ENCODE measurements at regions of chr1 and their contacts with region 1.

Region 1: DNA sequence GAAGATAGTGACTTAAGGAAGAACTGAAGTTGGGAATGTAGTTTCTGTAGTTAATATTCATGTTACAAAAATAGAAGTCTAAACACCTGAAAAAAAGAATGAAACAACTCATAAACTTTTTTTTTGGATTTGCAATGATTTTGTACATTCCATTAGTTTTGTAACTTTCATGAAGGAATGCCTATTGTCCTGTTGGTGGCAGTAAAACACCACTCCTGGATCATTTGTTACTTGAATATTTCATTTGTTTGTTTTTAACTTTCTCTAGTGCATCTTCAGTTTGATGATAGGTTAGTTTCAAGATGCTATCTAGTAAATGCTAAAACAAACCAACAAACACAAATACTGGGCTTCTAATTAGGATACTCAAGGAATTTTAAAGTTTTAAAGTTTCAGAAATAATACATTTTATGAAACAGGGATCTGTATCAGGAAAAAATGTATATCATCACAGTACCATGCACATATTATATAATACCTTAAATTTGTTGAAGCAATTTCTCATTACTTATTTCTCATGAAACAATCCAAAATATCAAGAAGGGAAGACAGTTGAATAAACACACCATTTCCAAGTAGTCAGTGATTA is 229.7 kb upstream of the CACYBP start:
- DNase-seq: no peak
- H3K4me3 ChIP-seq: no peak overlapping the region
- CTCF ChIP-seq: no peak
- POLR2A ChIP-seq: no peak

Region 2: GRCh38 chr1:174671826-174672225 is 98.2 kb before region 1 on chr1:
- intact Hi-C with region 1: no loop called
- DNase-seq: no peak
- H3K4me3 ChIP-seq: no peak overlapping the region
- CTCF ChIP-seq: no peak
- POLR2A ChIP-seq: no peak

Region 3: DNA sequence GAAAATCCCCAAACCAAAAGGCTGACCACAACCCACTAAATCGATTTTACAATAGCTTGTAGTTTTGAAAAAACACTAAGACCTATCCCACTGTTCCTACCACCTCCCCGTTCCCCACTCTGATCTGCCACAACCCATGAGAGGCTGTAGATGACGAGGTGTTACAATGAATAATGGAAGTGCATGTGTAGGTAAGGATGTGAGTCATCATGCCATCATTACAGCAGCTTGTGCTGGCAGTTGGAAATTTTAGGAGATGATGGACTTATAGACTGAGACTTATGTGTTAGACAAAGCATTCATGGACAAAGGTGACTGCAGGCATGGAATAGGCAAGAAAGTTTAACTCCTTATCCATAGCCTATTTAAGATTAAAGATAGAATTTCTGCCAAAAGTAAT is 45.0 kb after region 1 on chr1:
- intact Hi-C with region 1: no loop called
- DNase-seq: no peak
- H3K4me3 ChIP-seq: no peak overlapping the region
- CTCF ChIP-seq: no peak
- POLR2A ChIP-seq: no peak

Region 4: GRCh38 chr1:174982971-174983689 is 213.1 kb after region 1 on chr1:
- intact Hi-C with region 1: loop called (anchors 10 kb)
- DNase-seq: no peak
- H3K4me3 ChIP-seq: no peak overlapping the region
- CTCF ChIP-seq: no peak
- POLR2A ChIP-seq: no peak